SK-N-SH (cell line): ENCODE measurements at regions of chr10 and their contacts with region 1.

Region 1: DNA sequence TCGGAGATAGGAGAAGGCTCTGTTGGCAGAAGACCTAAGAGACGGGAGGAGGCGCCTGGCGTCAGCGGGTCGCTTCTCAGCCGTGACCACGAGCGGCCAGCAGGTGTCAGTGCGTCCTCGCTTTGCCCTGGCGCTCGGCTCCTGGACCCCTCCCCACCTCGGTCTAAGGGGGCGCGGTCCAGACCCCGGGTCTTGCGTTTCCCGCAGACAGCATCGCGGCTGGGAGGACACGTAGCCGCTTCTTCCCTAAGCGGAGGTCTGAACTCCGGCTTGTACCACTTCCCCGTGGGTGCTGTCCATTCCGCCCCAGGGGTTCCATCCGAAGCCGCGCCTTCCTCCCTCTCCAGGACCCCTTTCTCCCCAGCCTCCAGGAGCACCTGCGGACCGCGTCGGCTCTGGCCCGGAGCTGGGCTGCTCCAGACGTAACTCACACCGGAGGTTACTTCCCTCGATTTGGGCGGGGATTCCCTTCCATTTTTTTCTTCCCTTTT is 593 bp upstream of the ADRA2A start:
- DNase-seq: peak; percentile 93
- H3K4me3 ChIP-seq: peak overlapping the region; percentile 48 to 70
- H3K27ac ChIP-seq: no peak overlapping the region
- H3K4me1 ChIP-seq: peaks cover 0 to 18% of the 10 kb centered on the region in 2 experiments; a peak in 1 of 4 replicates
- H3K27me3 ChIP-seq: peaks cover 42% of the 10 kb centered on the region
- CTCF ChIP-seq: peak; percentile 75
- EP300 ChIP-seq: no peak
- RAD21 ChIP-seq: peak; percentile 88

Region 2: GRCh38 chr10:111063471-111063870 is 12.8 kb before region 1 on chr10:
- CTCF ChIA-PET with region 1: interaction called, 37 read pairs
- POLR2A ChIA-PET with region 1: no interaction called
- DNase-seq: no peak
- H3K4me3 ChIP-seq: no peak overlapping the region
- H3K27ac ChIP-seq: no peak overlapping the region
- H3K4me1 ChIP-seq: no peaks in the 10 kb centered on the region
- H3K27me3 ChIP-seq: no peaks in the 10 kb centered on the region
- CTCF ChIP-seq: no peak
- EP300 ChIP-seq: no peak
- RAD21 ChIP-seq: no peak

Region 3: GRCh38 chr10:111129363-111129762 is 53.1 kb after region 1 on chr10:
- CTCF ChIA-PET with region 1: interaction called, 10 read pairs
- POLR2A ChIA-PET with region 1: no interaction called
- DNase-seq: no peak
- H3K4me3 ChIP-seq: no peak overlapping the region
- H3K27ac ChIP-seq: no peak overlapping the region
- H3K4me1 ChIP-seq: peaks cover 0 to 12% of the 10 kb centered on the region in 2 experiments; a peak in 1 of 4 replicates
- H3K27me3 ChIP-seq: no peaks in the 10 kb centered on the region
- CTCF ChIP-seq: no peak
- EP300 ChIP-seq: no peak
- RAD21 ChIP-seq: no peak

Region 4: GRCh38 chr10:111319866-111320265 is 243.6 kb after region 1 on chr10:
- CTCF ChIA-PET with region 1: interaction called, 10 read pairs
- POLR2A ChIA-PET with region 1: no interaction called
- DNase-seq: no peak
- H3K4me3 ChIP-seq: no peak overlapping the region
- H3K27ac ChIP-seq: no peak overlapping the region
- H3K4me1 ChIP-seq: no peaks in the 10 kb centered on the region; a peak in 1 of 4 replicates
- H3K27me3 ChIP-seq: no peaks in the 10 kb centered on the region
- CTCF ChIP-seq: no peak
- EP300 ChIP-seq: no peak
- RAD21 ChIP-seq: no peak

Region 5: GRCh38 chr10:111360260-111360925 is 284.2 kb after region 1 on chr10:
- CTCF ChIA-PET with region 1: interaction called, 19 read pairs
- POLR2A ChIA-PET with region 1: no interaction called
- DNase-seq: peak; percentile 45
- H3K4me3 ChIP-seq: no peak overlapping the region; a peak in 1 of 4 replicates
- H3K27ac ChIP-seq: no peak overlapping the region
- H3K4me1 ChIP-seq: no peaks in the 10 kb centered on the region; a peak in 1 of 4 replicates
- H3K27me3 ChIP-seq: no peaks in the 10 kb centered on the region
- CTCF ChIP-seq: no peak
- EP300 ChIP-seq: no peak
- RAD21 ChIP-seq: peak; percentile 84

Region 6: DNA sequence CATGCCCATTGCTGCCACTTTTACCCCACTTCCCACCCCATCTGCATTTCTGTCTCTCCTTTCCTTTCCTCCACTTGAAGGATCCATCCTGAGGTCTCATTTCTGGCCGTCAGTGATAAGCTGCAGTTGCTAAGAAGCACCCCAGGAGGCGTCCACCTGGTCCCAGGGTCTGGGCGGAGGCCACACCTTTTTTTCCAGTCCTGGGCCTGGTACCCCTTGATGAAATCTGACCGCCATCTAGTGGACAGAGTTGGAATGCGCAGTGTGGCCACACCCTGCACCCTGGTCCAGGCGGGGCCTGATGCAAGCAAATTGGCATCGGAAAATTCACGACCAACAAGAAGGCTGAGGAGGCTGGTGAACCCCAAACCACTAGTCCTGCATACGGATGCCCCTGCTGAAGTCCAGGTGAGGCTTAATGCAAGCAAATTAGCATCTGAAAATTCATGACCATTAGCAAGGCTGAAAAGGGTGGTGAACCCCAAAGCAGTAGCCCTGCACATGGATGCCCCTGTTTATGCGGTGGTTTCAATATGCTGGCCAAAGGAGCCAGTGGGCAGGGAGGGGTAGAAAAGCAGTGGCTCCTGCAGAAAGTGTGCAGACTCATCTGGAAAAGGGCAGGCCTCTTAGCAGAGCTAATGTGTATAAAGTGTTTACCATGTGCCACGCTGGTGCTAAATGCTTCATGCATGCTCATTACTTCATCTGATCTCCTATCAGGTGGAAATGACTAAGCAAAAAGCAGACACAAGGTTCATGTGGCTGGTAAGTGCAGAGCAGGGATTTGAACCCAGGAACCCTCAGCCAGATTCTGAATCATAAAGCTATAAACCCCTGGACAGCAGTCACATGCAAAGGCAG is 1064.1 kb after region 1 on chr10:
- CTCF ChIA-PET with region 1: interaction called, 73 read pairs
- POLR2A ChIA-PET with region 1: no interaction called
- DNase-seq: peak; percentile 79
- H3K4me3 ChIP-seq: no peak overlapping the region; a peak in 1 of 4 replicates
- H3K27ac ChIP-seq: no peak overlapping the region
- H3K4me1 ChIP-seq: peaks cover 0 to 5% of the 10 kb centered on the region in 2 experiments; a peak in 1 of 4 replicates
- H3K27me3 ChIP-seq: no peaks in the 10 kb centered on the region
- CTCF ChIP-seq: peak; percentile 84
- EP300 ChIP-seq: no peak
- RAD21 ChIP-seq: peak; percentile 86